Thyroid gland (tissue), 4 donors: ENCODE measurements at regions of chr5 and their contacts with region 1.

Region 1: DNA sequence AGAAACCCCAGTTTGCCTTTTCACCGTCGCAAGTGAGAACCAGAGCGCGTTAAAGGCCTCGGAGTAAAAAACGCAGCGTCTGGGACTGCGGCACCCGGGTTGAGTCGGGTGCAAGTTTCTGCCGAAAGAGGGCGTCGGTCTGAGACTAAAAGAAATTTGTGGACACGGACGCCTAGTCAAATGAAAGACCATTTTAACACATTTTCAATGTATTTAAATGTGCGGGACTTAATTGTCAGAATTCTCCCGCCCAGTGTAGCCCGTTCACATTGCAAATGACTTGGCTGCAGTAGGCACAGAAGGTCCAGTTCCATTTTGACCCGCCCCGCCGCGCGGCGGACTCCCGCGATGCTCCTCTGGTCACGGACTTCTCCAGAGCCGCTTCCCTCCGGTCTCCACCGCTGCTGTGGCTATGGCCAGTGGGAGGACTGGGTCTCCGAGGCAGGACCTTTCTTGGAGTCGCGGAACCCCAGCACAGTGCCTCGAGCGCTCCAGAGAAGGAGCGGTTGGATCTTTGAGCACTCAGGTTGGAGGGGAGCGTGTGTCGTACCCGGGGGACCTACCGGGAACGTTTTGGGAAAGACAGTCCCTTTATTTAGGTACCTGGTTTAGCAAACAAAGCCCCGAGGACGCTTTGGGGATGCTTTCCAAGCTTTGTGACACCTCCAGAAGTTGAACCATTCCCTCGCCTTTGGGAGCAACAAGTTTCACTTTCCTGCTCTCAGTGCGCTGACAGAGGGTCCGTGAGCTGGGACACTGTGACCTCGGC is 1.2 kb upstream of the NPR3 start:
- DNase-seq: peak; percentile 72 to 78
- H3K4me3 ChIP-seq: peak overlapping the region; percentile 50 to 60 (median 53)
- H3K27ac ChIP-seq: peak overlapping the region; percentile 81 to 95 (median 87)
- H3K4me1 ChIP-seq: peaks cover 13 to 21% of the 10 kb centered on the region in 2 donors
- H3K27me3 ChIP-seq: no peaks in the 10 kb centered on the region
- CTCF ChIP-seq: peak in 5 of 6 experiments; percentile 28 to 75 (median 57)
- POLR2A ChIP-seq: peak in 1 of 2 donors; percentile 61

Region 2: DNA sequence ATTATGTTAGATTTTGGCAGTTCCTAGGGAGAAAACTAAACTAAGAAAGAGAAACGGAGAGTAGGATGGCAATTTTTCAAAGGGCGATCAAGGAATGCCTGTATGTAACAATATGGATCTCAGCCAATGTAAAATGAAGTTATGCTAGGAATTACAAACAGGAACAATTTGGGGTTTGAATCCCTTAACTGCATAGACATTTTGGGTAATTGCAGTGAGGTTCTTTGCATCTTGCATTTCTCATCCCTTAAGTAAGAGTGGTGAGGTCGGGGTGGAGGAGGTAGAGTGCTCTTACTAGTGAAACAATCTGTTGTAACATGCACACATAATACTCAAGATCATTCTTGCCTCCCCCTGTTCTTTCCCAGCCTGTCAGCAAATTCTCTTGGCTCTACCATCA is 138.7 kb after region 1 on chr5:
- intact Hi-C with region 1: loop called (anchors 5 kb)
- DNase-seq: no peak
- H3K4me3 ChIP-seq: no peak overlapping the region
- H3K27ac ChIP-seq: no peak overlapping the region
- H3K4me1 ChIP-seq: peaks cover 25 to 32% of the 10 kb centered on the region in 2 donors
- H3K27me3 ChIP-seq: no peaks in the 10 kb centered on the region
- CTCF ChIP-seq: no peak
- POLR2A ChIP-seq: no peak

Region 3: GRCh38 chr5:32916648-32917047 is 206.7 kb after region 1 on chr5:
- intact Hi-C with region 1: loop called (anchors 10 kb)
- DNase-seq: peak; percentile 51 to 70
- H3K4me3 ChIP-seq: no peak overlapping the region
- H3K27ac ChIP-seq: no peak overlapping the region
- H3K4me1 ChIP-seq: no peaks in the 10 kb centered on the region
- H3K27me3 ChIP-seq: no peaks in the 10 kb centered on the region
- CTCF ChIP-seq: peak; percentile 35 to 82 (median 70)
- POLR2A ChIP-seq: no peak